ENCODE measurements at regions of chr1 and their contacts with region 1.

Region 1: GRCh38 chr1:116168277-116169097 is 57.3 kb downstream of the MAB21L3 start:
- DNase-seq: peak; percentile 86
- ATAC-seq: peak; percentile 98
- H3K4me3 Mint-ChIP-seq: peak overlapping the region; percentile 71
- H3K27ac Mint-ChIP-seq: peak overlapping the region; percentile 85
- H3K4me1 Mint-ChIP-seq: peaks cover 16% of the 10 kb centered on the region
- H3K27me3 Mint-ChIP-seq: peaks cover 7% of the 10 kb centered on the region

Region 2: DNA sequence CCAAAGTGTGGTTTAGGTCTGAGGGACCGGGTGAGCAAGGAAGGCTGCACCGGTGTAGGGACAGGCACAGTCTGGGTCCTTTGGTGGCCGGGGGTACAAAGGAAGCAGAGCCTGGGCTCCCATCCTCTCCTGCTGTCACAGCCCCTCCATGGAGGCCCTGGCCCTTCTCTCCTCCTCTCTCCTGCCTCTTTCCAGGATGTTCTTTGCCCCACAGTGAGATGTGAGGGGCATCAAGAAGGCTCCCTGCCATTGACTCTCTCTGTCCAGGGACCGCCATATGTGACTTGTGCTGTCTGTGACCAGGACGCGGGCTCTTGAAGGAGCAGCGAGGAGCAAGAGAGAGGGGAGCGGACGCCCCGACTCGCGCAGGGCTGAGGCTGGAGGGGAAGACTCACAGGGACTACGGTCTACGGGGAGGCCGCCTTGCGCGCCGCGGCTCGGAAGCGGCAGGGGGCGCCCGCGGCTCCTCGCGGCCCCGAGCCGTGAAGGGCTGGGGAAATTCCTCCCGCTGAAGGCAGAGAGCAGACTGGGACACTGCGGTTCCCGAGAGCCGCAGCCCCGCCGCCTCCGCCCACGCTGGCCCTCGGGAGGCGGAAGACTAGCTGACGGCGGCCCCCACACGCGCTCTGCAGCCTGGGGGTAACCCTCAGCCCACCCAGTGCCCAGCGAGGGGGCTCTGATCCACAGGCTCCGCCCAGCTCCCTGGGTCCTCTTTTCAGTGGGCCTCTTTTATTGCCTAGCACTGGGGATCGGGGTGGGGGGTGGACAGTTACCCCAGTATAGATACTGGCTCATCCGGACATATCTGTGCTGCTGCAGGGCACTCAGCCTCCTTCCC is 16.5 kb before region 1 on chr1:
- CTCF ChIA-PET with region 1: interaction called, 18 read pairs
- POLR2A ChIA-PET with region 1: no interaction called
- DNase-seq: peak; percentile 77
- ATAC-seq: peak; percentile 97
- H3K4me3 Mint-ChIP-seq: peak overlapping the region; percentile 60
- H3K27ac Mint-ChIP-seq: peak overlapping the region; percentile 70
- H3K4me1 Mint-ChIP-seq: peaks cover 19% of the 10 kb centered on the region
- H3K27me3 Mint-ChIP-seq: peaks cover 19% of the 10 kb centered on the region

Region 3: GRCh38 chr1:116202934-116203723 is 34.6 kb after region 1 on chr1:
- CTCF ChIA-PET with region 1: no interaction called
- POLR2A ChIA-PET with region 1: no interaction called
- DNase-seq: no peak
- ATAC-seq: no peak
- H3K4me3 Mint-ChIP-seq: no peak overlapping the region
- H3K27ac Mint-ChIP-seq: no peak overlapping the region
- H3K4me1 Mint-ChIP-seq: no peaks in the 10 kb centered on the region
- H3K27me3 Mint-ChIP-seq: peaks cover 11% of the 10 kb centered on the region

Region 4: DNA sequence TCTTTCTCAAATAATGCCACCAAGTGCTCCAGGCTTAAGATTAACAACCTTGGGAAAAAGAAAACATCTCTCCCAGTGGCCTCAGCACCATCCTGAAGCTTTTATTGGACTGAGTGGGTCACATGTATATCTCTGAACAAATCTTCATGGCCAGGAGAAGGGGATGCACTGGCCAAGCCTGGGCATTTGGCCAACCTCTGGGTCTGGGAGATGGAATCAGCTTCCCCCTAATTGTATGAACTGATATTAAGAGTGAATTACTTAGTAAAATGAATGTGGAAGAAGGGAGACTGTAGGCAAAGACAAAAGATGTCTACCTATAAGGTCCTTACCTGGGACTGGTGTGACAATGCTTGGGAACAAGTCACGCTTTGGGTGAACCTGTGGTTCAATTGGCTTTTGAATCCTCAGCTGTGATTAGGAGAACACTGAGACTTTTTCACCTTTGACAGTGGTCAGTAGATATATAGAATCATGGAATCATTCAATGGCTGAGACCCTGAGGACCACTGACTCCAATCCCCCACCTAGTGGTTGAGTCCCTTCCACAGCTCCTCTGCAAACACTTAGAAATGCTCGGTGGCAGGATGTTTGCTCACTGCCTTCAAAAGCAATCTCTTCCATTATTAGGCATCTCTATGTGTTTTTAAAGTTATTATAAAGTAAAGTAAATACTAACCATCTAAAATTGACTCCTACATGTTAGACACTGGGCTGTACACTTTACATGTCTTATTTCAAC is 102.0 kb after region 1 on chr1:
- CTCF ChIA-PET with region 1: no interaction called
- POLR2A ChIA-PET with region 1: no interaction called
- DNase-seq: no peak
- ATAC-seq: no peak
- H3K4me3 Mint-ChIP-seq: no peak overlapping the region
- H3K27ac Mint-ChIP-seq: no peak overlapping the region
- H3K4me1 Mint-ChIP-seq: no peaks in the 10 kb centered on the region
- H3K27me3 Mint-ChIP-seq: no peaks in the 10 kb centered on the region

Measured in activated CD8-positive, alpha-beta T cell treated with anti-CD3 and anti-CD28 coated beads, Interleukin-2, amount 10 ng/mL, durations not matched to agents 7 days and 5 days (primary cell).